PC-9 (cell line): ENCODE measurements at regions of chr7 and their contacts with region 1.

Region 1: GRCh38 chr7:142496545-142497041 is 238.7 kb upstream of the PRSS58 start:
- DNase-seq: peak; percentile 84 to 98
- H3K4me3 ChIP-seq: peak overlapping the region; percentile 22; the same call in 1 of the 2 replicates
- H3K27ac ChIP-seq: peak overlapping the region; percentile 74
- H3K4me1 ChIP-seq: peaks cover 51% of the 10 kb centered on the region
- H3K27me3 ChIP-seq: no peaks in the 10 kb centered on the region
- CTCF ChIP-seq: peak; percentile 95

Region 2: GRCh38 chr7:141776374-141776773 is 720.2 kb before region 1 on chr7 and contains the start of gene TAS2R4:
- CTCF ChIA-PET with region 1: no interaction called
- POLR2A ChIA-PET with region 1: no interaction called
- intact Hi-C with region 1: no loop called
- DNase-seq: no peak
- H3K4me3 ChIP-seq: no peak within 1 kb of the TSS
- H3K27ac ChIP-seq: no peak within 1 kb of the TSS
- H3K4me1 ChIP-seq: no peaks in the 10 kb centered on the region
- H3K27me3 ChIP-seq: no peaks in the 10 kb centered on the region
- CTCF ChIP-seq: no peak
- total RNA-seq, gene TAS2R4: 0.65 and 1.4 TPM in 2 replicates

Region 3: DNA sequence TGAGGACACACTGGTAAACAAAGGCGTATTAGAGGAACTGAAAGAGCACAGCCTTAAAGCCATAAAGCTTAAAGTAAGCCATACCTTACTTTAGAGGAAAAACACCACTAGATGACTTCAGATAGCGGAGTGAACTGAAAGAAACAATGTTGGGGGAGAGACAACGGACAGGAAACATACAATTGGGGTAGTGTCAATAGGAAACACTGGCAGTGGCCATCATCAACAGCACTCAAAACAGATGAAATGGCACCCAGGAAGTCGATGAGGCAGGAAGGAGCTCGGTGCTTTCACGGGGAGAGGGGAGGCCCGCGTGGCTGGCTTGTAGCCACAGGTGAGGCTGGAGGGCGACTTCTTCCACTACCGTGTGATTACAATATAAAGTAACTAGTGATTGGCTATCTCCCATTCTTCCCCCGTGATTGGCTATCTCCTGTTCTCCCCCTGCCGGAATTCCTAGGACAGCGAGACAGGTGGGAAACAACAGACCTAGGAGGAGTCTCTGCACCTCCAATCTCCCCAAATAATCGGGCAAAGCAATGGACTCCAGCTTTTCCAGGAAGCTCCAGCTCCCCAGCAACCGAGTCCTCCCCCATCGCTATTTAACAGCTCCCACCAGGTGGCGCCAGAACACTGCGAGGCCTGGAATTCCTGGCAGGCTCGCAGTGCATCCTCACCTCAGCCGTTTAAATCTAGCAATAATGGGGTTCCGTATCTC is 520.6 kb before region 1 on chr7:
- CTCF ChIA-PET with region 1: no interaction called
- POLR2A ChIA-PET with region 1: no interaction called
- intact Hi-C with region 1: loop called (anchors 5 kb)
- DNase-seq: peak; percentile 44 to 86
- H3K4me3 ChIP-seq: no peak overlapping the region
- H3K27ac ChIP-seq: no peak overlapping the region
- H3K4me1 ChIP-seq: no peaks in the 10 kb centered on the region; the same call in 1 of the 2 replicates
- H3K27me3 ChIP-seq: no peaks in the 10 kb centered on the region
- CTCF ChIP-seq: peak; percentile 96

Region 4: GRCh38 chr7:142385491-142386340 is 110.9 kb before region 1 on chr7:
- CTCF ChIA-PET with region 1: no interaction called
- POLR2A ChIA-PET with region 1: interaction called, 3 read pairs
- intact Hi-C with region 1: loop called (anchors 2 kb)
- DNase-seq: peak; percentile 64 to 69
- H3K4me3 ChIP-seq: no peak overlapping the region
- H3K27ac ChIP-seq: no peak overlapping the region
- H3K4me1 ChIP-seq: 0 out of 2 replicates have a peak, but pooled peaks cover 12% of the 10 kb centered on the region
- H3K27me3 ChIP-seq: no peaks in the 10 kb centered on the region
- CTCF ChIP-seq: peak; percentile 79

Region 5: GRCh38 chr7:142405122-142405765 is 91.3 kb before region 1 on chr7:
- CTCF ChIA-PET with region 1: no interaction called
- POLR2A ChIA-PET with region 1: no interaction called
- intact Hi-C with region 1: no loop called
- DNase-seq: no peak
- H3K4me3 ChIP-seq: no peak overlapping the region
- H3K27ac ChIP-seq: no peak overlapping the region
- H3K4me1 ChIP-seq: no peaks in the 10 kb centered on the region
- H3K27me3 ChIP-seq: no peaks in the 10 kb centered on the region
- CTCF ChIP-seq: no peak

Region 6: DNA sequence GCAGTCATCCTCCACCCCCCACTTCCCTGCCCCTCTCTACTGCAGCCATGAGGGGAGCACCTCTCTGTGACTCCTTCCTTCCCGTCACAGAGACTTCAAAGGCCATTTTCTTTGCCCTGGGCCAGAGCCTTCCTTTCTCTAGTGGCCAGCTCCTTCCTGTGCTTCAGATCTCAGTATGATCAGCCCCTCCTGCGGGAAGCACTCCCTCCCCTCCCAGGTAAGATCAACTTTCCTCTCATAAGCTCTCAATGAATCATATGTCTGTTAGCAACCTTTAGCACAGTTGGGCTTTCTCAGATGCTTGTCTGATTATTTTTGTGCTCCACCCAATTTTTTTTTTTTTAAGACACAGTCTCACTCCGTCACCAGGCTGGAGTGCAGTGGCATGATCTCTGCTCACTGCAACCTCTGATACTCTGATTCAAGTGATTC is 11.7 kb after region 1 on chr7:
- CTCF ChIA-PET with region 1: interaction called, 20 read pairs
- POLR2A ChIA-PET with region 1: interaction called, 6 read pairs
- intact Hi-C with region 1: loop called (anchors 1 kb)
- DNase-seq: peak; percentile 78 to 99
- H3K4me3 ChIP-seq: no peak overlapping the region; the same call in 1 of the 2 replicates
- H3K27ac ChIP-seq: peak overlapping the region; percentile 90
- H3K4me1 ChIP-seq: peaks cover 29% of the 10 kb centered on the region
- H3K27me3 ChIP-seq: no peaks in the 10 kb centered on the region
- CTCF ChIP-seq: no peak

Region 7: DNA sequence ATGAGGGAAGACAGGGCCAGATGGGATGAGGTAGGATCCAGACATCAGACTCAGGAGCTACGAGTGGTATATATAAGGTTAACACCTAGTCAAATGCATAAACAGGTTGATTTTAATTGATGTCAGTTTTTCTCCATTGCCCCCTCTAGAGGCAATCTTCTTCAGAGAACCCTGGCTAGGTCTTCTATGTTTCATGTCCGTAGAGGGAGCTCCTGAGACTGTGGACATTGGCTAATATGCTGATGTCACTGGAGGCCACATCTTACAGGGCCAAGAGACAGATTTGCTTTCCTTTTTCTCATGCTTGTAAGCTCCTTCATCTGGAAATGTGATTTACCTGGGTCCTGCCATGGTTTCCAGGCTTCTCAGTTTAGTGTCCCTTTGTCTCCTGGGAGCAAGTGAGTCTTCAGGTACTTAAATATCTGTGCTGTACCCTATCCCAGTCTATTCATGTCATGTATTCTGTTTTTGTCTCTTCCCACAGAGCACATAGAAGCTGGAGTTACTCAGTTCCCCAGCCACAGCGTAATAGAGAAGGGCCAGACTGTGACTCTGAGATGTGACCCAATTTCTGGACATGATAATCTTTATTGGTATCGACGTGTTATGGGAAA is 91.1 kb after region 1 on chr7:
- CTCF ChIA-PET with region 1: interaction called, 3 read pairs
- POLR2A ChIA-PET with region 1: no interaction called
- intact Hi-C with region 1: loop called (anchors 5 kb)
- DNase-seq: peak; percentile 30 to 77
- H3K4me3 ChIP-seq: no peak overlapping the region
- H3K27ac ChIP-seq: 0 out of 2 replicates have a peak overlapping the region, but pooled peaks have one; percentile 27
- H3K4me1 ChIP-seq: peaks cover 26% of the 10 kb centered on the region
- H3K27me3 ChIP-seq: no peaks in the 10 kb centered on the region
- CTCF ChIP-seq: peak; percentile 78

Region 8: DNA sequence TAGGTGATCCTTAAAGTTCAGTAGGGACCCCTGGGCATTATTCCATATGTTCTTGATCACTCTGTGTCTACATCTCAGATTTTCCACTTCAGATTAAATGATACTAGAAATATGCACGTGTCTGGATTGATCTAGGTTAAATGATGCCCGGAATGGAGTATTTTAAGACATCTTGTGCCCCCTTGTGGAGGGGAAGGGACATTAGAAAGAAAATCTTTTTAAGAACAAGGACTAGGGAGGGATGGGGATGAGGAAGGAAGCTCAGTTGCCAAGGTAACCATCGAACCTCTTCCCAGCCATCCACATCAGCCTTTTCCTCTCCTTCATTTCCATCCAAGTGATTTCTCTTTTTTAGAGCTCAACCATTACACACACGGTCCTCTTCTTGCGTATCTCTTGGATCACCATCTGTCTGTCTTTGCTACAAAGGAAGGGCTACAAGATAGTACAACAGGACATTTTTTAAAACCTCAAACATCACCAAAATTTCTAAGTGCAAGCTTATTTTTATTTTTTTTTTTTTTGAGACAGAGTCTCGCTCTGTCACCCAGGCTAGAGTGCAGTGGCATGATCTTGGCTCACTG is 314.7 kb after region 1 on chr7:
- CTCF ChIA-PET with region 1: no interaction called
- POLR2A ChIA-PET with region 1: no interaction called
- intact Hi-C with region 1: loop called (anchors 1 kb)
- DNase-seq: peak; percentile 22 to 78
- H3K4me3 ChIP-seq: no peak overlapping the region
- H3K27ac ChIP-seq: peak overlapping the region; percentile 96
- H3K4me1 ChIP-seq: peaks cover 84% of the 10 kb centered on the region
- H3K27me3 ChIP-seq: no peaks in the 10 kb centered on the region
- CTCF ChIP-seq: peak; percentile 95

Region 9: DNA sequence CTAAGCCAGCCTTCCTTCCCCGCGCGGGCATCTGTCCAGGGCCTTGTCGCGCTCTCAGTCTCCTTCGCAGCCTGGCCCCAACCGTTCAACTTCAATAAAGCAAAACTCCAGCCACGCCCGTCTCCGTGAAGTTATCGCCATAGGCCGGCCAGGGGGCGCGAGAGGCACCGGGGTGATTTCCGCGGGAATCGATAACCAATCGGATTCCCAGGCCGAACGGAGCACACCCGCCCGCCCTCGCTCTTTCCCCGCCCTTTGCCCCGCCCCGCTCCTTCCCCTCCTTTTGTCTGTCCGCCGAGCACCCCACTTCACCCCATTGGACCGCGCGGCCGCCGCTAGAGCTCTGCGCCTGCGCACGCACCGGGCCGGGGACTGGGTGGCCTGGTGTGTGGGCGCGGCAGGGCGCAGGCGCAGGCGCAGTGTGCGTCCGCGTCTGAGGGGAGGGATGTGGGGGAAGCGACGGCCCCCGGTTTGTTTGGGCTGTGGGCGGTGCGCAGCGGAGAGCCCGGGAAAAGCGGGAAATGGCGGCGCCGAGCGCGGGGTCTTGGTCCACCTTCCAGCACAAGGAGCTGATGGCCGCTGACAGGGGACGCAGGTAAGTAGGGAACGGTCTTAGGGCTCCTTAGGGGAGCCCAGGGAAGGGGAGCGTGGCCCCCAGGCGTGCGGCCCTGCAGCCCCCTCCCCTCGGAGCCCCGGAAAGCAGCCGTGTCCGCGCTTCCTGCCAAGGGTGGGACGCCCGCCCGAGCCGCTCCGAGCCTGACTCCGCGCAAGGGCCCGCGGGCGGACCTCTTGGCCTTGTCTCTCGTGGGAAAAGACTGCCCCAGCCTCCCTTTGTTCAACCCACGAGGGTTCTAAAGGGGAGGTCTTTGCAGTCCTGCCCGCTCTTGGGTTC is 791.6 kb after region 1 on chr7 and contains the start of gene CASP2:
- CTCF ChIA-PET with region 1: interaction called, 10 read pairs
- POLR2A ChIA-PET with region 1: no interaction called
- intact Hi-C with region 1: no loop called
- DNase-seq: peak; percentile 90 to 98
- H3K4me3 ChIP-seq: peak within 1 kb of the TSS; percentile 77
- H3K27ac ChIP-seq: peak within 1 kb of the TSS; percentile 55
- H3K4me1 ChIP-seq: peaks cover 60% of the 10 kb centered on the region
- H3K27me3 ChIP-seq: no peaks in the 10 kb centered on the region
- CTCF ChIP-seq: no peak; the same call in 1 of the 2 replicates
- total RNA-seq, gene CASP2: 52.7 and 67.2 TPM in 2 replicates